ENCODE measurements at regions of chr2 and their contacts with region 1.

Region 1: DNA sequence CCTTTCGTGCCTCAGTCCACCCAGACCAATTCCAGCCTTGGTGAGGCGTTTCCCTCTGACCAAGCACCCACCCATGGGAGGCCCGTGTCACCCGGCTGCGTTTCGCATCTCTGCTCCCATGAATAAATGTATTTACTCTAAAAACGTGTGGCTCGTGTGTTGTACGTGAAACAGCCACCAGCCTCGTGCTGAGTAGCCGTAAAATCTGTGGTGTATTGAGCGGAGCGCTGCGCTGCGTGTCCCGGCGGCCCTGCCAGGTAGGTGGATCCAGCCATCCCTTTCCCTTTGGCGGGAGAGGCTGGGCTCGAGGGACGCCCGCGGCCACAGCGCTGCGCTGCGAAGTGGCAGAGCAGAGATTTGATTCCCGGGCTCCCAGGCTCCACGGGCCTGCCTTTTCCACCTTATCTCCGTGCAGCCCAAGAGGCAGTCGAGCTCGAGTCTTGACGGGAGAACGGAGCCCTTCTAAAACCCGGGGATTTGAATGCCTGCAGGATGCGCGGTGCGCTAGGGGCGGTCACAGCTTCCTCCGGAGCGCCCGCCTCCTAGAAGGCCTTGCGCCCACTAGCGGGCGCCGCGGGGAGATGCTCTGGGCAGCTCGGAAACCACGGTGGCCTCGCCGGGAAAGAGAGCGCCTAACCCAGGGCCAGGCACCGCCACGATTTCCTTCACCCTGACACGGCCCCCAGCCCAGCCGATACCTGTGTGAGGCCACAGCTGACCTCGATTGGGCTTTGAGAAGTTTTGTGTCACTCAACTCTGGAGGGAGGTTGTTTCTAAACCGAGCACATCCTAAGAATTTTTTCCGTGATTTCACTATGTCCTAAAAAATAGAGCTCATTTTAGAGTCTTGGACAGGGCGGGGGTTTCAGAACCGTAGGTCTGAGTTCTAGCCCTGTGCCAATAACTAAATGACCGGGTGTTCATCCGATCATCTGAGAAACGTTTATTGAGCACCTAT is 3.9 kb upstream of the PSMD1 start:
- DNase-seq: peak; percentile 90
- ATAC-seq: peak; percentile 88
- H3K4me3 Mint-ChIP-seq: peak overlapping the region; percentile 76
- H3K27ac Mint-ChIP-seq: no peak overlapping the region
- H3K4me1 Mint-ChIP-seq: peaks cover 11% of the 10 kb centered on the region
- H3K27me3 Mint-ChIP-seq: peaks cover 46% of the 10 kb centered on the region
- CTCF ChIP-seq: peak; percentile 80

Region 2: DNA sequence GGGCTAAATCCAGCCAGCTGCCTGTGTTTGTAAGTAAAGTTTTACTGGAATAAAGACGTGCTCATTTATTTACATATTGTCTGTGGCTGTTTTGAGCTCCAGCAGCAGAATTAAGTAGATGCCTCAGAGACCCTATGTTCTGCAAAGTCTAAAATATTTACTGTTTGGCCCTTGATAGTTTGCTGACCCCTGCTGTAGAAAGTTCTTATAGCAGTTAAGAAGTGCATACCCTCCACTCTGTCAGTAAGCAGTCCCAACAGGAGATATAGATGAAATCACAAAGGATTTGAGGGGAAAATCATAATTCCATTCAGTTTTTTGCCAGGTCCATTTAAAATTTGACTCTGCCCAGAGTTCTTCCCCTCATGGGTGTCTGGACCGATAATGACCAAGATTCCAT is 238.2 kb before region 1 on chr2:
- CTCF ChIA-PET with region 1: interaction called, 10 read pairs
- POLR2A ChIA-PET with region 1: no interaction called
- DNase-seq: no peak
- ATAC-seq: peak; percentile 78
- H3K4me3 Mint-ChIP-seq: no peak overlapping the region
- H3K27ac Mint-ChIP-seq: no peak overlapping the region
- H3K4me1 Mint-ChIP-seq: no peaks in the 10 kb centered on the region
- H3K27me3 Mint-ChIP-seq: no peaks in the 10 kb centered on the region
- CTCF ChIP-seq: no peak; the same call in 1 of the 2 replicates

Region 3: GRCh38 chr2:230866756-230867523 is 185.8 kb before region 1 on chr2:
- CTCF ChIA-PET with region 1: interaction called, 14 read pairs
- POLR2A ChIA-PET with region 1: interaction called, 3 read pairs
- DNase-seq: no peak
- ATAC-seq: no peak
- H3K4me3 Mint-ChIP-seq: peak overlapping the region; percentile 88
- H3K27ac Mint-ChIP-seq: peak overlapping the region; percentile 96
- H3K4me1 Mint-ChIP-seq: peaks cover 76% of the 10 kb centered on the region
- H3K27me3 Mint-ChIP-seq: no peaks in the 10 kb centered on the region; the same call in 1 of the 2 replicates
- CTCF ChIP-seq: no peak

Region 4: GRCh38 chr2:230987137-230988020 is 65.4 kb before region 1 on chr2:
- CTCF ChIA-PET with region 1: interaction called, 18 read pairs
- POLR2A ChIA-PET with region 1: no interaction called
- DNase-seq: peak; percentile 92
- ATAC-seq: peak; percentile 78
- H3K4me3 Mint-ChIP-seq: peak overlapping the region; percentile 61
- H3K27ac Mint-ChIP-seq: peak overlapping the region; percentile 58
- H3K4me1 Mint-ChIP-seq: peaks cover 24% of the 10 kb centered on the region
- H3K27me3 Mint-ChIP-seq: no peaks in the 10 kb centered on the region
- CTCF ChIP-seq: peak; percentile 93

Region 5: GRCh38 chr2:231007286-231008007 is 45.3 kb before region 1 on chr2:
- CTCF ChIA-PET with region 1: interaction called, 13 read pairs
- POLR2A ChIA-PET with region 1: interaction called, 8 read pairs
- DNase-seq: no peak
- ATAC-seq: no peak
- H3K4me3 Mint-ChIP-seq: no peak overlapping the region
- H3K27ac Mint-ChIP-seq: 0 out of 2 replicates have a peak overlapping the region, but pooled peaks have one; percentile 65
- H3K4me1 Mint-ChIP-seq: no peaks in the 10 kb centered on the region
- H3K27me3 Mint-ChIP-seq: peaks cover 7% of the 10 kb centered on the region
- CTCF ChIP-seq: no peak

Region 6: DNA sequence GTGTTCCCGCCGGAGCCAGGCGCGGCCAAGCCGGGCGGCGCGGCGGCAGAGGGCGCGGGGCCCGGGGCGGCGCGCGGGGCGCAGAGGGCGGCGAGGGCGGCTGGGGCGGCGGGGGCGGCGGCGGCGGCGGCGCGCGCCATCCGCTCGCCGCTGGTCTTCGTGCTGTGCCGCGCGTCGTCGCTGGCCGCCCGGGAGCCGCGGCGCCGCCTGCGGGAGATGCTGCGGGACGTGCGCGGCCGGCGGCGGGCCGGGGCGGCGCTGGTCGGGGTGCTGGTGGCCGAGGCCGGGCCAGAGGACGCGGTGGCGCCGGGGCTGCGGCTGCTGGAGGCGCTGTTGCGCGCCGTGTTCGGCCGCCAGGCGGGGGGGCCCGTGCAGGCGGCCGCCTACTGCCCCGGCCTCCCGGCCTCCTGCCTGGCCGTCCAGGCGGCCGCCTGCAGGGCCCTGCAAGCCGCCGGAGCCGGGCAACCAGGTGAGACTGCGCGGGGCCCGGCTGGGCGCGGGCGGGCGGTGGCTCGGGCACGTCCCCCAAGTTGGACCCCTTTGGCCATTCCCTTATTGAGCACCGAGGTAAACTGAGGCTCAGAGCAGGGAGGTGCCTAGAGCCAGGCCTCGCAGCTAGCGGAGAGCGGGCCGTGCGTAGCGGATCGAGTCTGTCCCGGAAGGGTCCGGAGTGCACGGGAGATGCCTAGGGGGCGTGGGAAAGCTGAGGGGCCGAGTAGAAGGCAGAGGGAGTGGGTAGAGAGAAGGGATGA is 14.9 kb before region 1 on chr2:
- CTCF ChIA-PET with region 1: interaction called, 23 read pairs
- POLR2A ChIA-PET with region 1: no interaction called
- DNase-seq: peak; percentile 35
- ATAC-seq: peak; percentile 59
- H3K4me3 Mint-ChIP-seq: peak overlapping the region; percentile 69
- H3K27ac Mint-ChIP-seq: no peak overlapping the region
- H3K4me1 Mint-ChIP-seq: peaks cover 11% of the 10 kb centered on the region
- H3K27me3 Mint-ChIP-seq: peaks cover 77% of the 10 kb centered on the region
- CTCF ChIP-seq: no peak

Region 7: DNA sequence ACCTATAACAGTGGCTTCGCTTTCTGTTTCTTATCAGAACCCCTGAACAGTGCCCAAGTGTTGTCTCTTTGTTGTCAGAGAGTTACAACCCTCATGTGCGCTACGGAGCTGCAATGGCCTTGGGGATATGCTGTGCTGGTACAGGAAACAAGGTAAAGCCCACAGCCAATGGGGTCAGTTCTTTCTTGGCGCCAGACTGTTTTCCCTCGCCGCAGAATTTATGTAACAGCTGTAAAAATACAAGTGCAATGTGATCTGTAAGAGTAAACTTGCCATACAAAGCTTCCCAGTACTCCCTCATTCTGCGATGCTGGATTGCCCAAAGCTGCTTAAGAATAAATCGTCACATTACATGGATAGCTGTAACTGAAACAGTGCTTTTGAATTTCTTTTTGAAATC is 85.9 kb after region 1 on chr2:
- CTCF ChIA-PET with region 1: no interaction called
- POLR2A ChIA-PET with region 1: no interaction called
- DNase-seq: no peak
- ATAC-seq: no peak
- H3K4me3 Mint-ChIP-seq: no peak overlapping the region
- H3K27ac Mint-ChIP-seq: no peak overlapping the region
- H3K4me1 Mint-ChIP-seq: peaks cover 11% of the 10 kb centered on the region
- H3K27me3 Mint-ChIP-seq: no peaks in the 10 kb centered on the region
- CTCF ChIP-seq: no peak

Measured in WTC11 (cell line).